ENCODE measurements at regions of chr19 and their contacts with region 1.

Region 1: GRCh38 chr19:6292006-6292405 is 12.2 kb upstream of the MLLT1 start:
- DNase-seq: no peak
- H3K4me3 ChIP-seq: no peak overlapping the region
- H3K27ac ChIP-seq: no peak overlapping the region
- H3K4me1 ChIP-seq: no peaks in the 10 kb centered on the region
- H3K27me3 ChIP-seq: peaks cover 2% of the 10 kb centered on the region
- CTCF ChIP-seq: no peak

Region 2: GRCh38 chr19:5913739-5914357 is 378.2 kb before region 1 on chr19 and contains the start of gene CAPS:
- CTCF ChIA-PET with region 1: no interaction called
- dilution Hi-C with region 1: no loop called
- in situ Hi-C with region 1: no loop called
- intact Hi-C with region 1: no loop called
- DNase-seq: peak; percentile 72
- H3K4me3 ChIP-seq: peak within 1 kb of the TSS in 1 of 3 experiments; percentile 10
- H3K27ac ChIP-seq: no peak within 1 kb of the TSS
- H3K4me1 ChIP-seq: peaks cover 37% of the 10 kb centered on the region
- H3K27me3 ChIP-seq: no peaks in the 10 kb centered on the region
- CTCF ChIP-seq: no peak
- total RNA-seq, gene CAPS: 9.0 to 15.0 TPM

Region 3: GRCh38 chr19:5987077-5987818 is 304.8 kb before region 1 on chr19:
- CTCF ChIA-PET with region 1: no interaction called
- dilution Hi-C with region 1: loop called (anchors 5 kb)
- in situ Hi-C with region 1: no loop called
- intact Hi-C with region 1: no loop called
- DNase-seq: peak; percentile 61
- H3K4me3 ChIP-seq: no peak overlapping the region
- H3K27ac ChIP-seq: no peak overlapping the region
- H3K4me1 ChIP-seq: peaks cover 15% of the 10 kb centered on the region
- H3K27me3 ChIP-seq: no peaks in the 10 kb centered on the region
- CTCF ChIP-seq: peak; percentile 93 to 94

Region 4: DNA sequence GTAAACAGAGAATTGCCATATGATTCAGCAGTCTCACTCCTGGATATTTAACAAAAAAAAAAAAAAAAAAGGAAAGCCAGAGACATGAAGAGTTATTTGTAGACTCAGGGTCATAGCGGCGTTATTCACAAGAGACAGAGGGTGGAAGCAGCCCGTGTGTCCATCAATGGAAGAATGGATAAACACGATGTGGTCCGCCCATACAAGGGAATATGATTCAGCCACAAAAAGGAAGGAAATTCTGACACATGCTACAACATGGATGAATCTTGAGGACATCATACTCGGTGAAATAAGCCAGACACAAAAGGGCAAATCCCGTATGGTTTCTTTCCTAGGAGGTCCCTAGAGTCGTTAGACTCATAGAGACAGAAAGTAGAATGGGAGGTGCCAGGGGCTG is 141.7 kb before region 1 on chr19:
- CTCF ChIA-PET with region 1: no interaction called
- dilution Hi-C with region 1: loop called (anchors 5 kb)
- in situ Hi-C with region 1: no loop called
- intact Hi-C with region 1: no loop called
- DNase-seq: no peak
- H3K4me3 ChIP-seq: no peak overlapping the region
- H3K27ac ChIP-seq: no peak overlapping the region
- H3K4me1 ChIP-seq: no peaks in the 10 kb centered on the region
- H3K27me3 ChIP-seq: no peaks in the 10 kb centered on the region
- CTCF ChIP-seq: no peak

Region 5: GRCh38 chr19:6322284-6322683 is 30.3 kb after region 1 on chr19:
- CTCF ChIA-PET with region 1: no interaction called
- dilution Hi-C with region 1: no loop called
- in situ Hi-C with region 1: no loop called
- intact Hi-C with region 1: no loop called
- DNase-seq: no peak
- H3K4me3 ChIP-seq: no peak overlapping the region
- H3K27ac ChIP-seq: no peak overlapping the region
- H3K4me1 ChIP-seq: no peaks in the 10 kb centered on the region
- H3K27me3 ChIP-seq: no peaks in the 10 kb centered on the region
- CTCF ChIP-seq: no peak

Region 6: GRCh38 chr19:6333440-6333839 is 41.4 kb after region 1 on chr19 and contains the start of gene ACER1:
- CTCF ChIA-PET with region 1: no interaction called
- dilution Hi-C with region 1: loop called (anchors 5 kb)
- in situ Hi-C with region 1: no loop called
- intact Hi-C with region 1: no loop called
- DNase-seq: no peak
- H3K4me3 ChIP-seq: no peak within 1 kb of the TSS
- H3K27ac ChIP-seq: no peak within 1 kb of the TSS
- H3K4me1 ChIP-seq: no peaks in the 10 kb centered on the region
- H3K27me3 ChIP-seq: no peaks in the 10 kb centered on the region
- CTCF ChIP-seq: no peak
- total RNA-seq, gene ACER1: not detected

Region 7: DNA sequence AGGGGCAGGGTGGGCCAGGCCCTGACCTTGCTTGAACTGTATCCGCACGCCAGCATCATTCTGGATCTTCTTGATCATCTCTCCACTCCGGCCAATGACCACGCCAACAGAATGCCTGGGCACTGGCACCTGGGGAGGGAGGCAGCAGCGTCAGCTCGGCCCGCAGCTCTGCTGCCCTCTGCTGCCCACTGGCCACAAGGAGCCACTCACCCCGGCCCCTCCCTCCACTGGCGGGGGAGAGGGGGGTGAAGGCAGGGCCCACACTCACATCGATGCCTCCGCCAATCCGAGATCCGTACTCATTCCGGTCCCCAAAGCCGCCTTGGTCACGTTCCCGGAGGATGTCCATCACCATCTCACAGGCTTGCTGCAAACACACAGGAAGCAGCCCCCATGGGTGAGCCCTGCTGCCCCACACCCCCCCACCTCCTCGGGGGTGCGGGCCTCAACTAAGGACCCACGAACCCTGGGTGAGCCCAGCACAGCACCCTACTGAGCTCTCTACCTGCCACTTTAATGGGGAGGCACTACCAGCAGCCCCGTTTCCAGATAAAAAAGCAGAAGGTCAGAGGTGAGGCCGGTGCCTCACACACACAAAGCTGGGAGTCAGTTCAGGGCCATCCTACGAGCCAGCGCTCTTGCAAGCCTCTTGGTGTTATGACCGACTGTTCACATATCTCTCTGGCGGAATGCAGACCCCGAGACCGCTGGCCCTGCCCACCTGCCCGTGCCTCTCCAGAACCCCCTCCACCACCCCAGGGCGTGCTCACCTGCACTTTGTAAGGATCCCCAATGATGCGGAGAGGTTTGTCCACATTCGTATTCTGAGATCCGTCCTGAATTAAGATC is 125.9 kb after region 1 on chr19:
- CTCF ChIA-PET with region 1: no interaction called
- dilution Hi-C with region 1: loop called (anchors 5 kb)
- in situ Hi-C with region 1: no loop called
- intact Hi-C with region 1: no loop called
- DNase-seq: no peak
- H3K4me3 ChIP-seq: no peak overlapping the region
- H3K27ac ChIP-seq: no peak overlapping the region
- H3K4me1 ChIP-seq: peaks cover 10% of the 10 kb centered on the region
- H3K27me3 ChIP-seq: no peaks in the 10 kb centered on the region
- CTCF ChIP-seq: peak in 1 of 2 donors; percentile 56

Region 8: DNA sequence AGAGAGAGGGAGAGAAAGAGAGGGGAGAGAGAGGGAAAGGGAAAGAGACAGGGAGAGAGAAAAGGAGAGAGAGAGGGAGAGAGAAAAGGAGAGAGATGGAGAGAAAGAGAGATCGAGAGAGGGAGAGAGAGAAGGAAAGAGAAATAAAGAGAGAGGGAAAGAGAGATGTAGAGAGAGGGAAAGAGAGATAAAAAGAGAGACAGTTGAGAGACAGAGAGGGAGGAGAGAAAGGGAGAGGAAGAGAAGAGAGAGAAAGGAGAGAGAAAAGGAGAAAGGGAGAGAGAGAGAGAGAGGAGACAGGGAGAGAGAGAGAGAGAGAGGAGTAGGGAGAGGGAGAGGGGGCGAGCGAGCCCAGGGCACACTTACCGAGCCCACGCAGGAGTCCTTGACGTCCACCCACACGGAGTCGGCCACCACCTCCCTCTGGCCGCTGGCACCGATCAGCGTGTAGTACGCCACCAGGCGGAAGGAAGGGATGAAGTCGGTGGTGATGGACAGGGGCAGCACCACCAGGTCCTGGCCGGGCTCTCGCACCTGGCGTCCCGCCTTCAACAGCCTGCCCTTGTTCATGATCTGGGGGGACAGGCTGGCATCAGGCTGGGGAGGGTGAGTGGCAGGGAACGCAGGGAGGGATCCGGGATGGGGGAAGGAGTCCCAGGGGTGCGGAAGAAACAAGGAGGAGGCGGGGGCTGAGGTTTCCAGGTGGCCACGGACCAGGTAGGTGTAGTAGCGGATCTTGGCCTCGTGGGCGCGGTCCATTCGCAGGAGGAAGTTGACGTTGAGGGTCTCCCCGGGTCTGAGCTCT is 418.5 kb after region 1 on chr19:
- CTCF ChIA-PET with region 1: no interaction called
- dilution Hi-C with region 1: no loop called
- in situ Hi-C with region 1: no loop called
- intact Hi-C with region 1: no loop called
- DNase-seq: no peak
- H3K4me3 ChIP-seq: no peak overlapping the region
- H3K27ac ChIP-seq: no peak overlapping the region
- H3K4me1 ChIP-seq: no peaks in the 10 kb centered on the region
- H3K27me3 ChIP-seq: no peaks in the 10 kb centered on the region
- CTCF ChIP-seq: peak; percentile 11 to 33

Region 9: DNA sequence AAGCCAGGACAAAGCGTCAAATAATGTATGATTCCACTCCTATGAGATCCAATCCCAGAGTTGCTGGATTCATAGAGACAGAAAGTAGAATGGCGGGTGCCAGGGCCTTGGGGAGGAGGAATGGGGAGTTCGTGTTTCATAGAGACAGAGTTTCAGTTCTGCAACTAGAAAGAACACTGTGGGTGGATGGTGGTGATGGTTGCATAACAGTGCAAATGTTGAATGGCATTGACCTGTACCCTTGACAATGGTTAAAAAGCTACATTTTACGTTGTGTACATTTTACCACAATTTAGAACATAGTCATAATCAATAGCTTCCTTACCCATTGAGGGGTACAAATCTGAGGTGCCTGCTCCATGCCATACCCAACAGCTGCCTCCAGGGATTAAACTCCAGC is 695.8 kb after region 1 on chr19:
- CTCF ChIA-PET with region 1: interaction called, 12 read pairs
- dilution Hi-C with region 1: no loop called
- in situ Hi-C with region 1: no loop called
- intact Hi-C with region 1: no loop called
- DNase-seq: no peak
- H3K4me3 ChIP-seq: no peak overlapping the region
- H3K27ac ChIP-seq: no peak overlapping the region
- H3K4me1 ChIP-seq: no peaks in the 10 kb centered on the region
- H3K27me3 ChIP-seq: no peaks in the 10 kb centered on the region
- CTCF ChIP-seq: no peak

Measured in mammary epithelial cell (primary cell).